ENCODE measurements at regions of chr1 and their contacts with region 1.

Region 1: DNA sequence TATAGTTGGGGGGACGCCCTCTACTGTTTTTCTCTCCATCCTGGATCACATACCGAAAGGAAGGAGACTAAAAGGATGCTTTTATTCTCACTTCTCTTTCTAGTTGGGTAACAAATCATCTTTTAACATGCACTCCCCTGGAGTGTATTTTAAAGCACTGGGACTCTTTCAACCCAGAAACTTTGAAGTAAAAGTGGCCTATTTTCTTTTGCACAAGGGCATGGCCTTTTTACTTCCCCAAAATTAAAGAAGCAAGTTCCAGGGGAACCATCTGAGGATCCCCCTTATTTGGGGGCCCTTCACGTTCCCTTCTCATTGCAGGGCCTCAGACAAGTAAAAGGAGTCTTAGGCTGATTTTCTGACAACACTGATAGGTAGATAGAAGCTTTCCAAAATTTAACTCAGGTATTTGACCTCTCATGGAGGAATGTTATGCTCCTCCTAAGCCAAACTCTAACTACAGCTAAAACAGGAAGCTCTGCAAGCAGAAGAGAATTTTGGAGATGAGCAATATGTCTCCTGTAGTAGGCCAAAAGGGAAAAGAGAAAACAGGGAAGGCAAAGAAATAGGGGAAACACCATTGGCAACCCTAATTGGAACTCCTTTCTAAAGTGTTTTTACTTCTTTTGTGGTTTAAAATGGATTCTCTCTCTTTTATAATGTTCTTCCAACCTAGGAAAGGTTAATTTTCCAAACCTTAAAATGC is 8.9 kb upstream of the CD46 start:
- DNase-seq: no peak
- ATAC-seq: no peak
- H3K4me3 ChIP-seq: no peak overlapping the region
- H3K27ac ChIP-seq: peak overlapping the region; percentile 11; the same call in 1 of the 3 replicates
- H3K4me1 ChIP-seq: peaks cover 7 to 39% of the 10 kb centered on the region in 2 experiments
- H3K27me3 ChIP-seq: no peaks in the 10 kb centered on the region
- CTCF ChIP-seq: no peak
- EP300 ChIP-seq: no peak
- POLR2A ChIP-seq: no peak
- RAD21 ChIP-seq: no peak

Region 2: GRCh38 chr1:207787776-207788175 is 44.8 kb after region 1 on chr1:
- CTCF ChIA-PET with region 1: no interaction called
- POLR2A ChIA-PET with region 1: no interaction called
- in situ Hi-C with region 1: no loop called
- intact Hi-C with region 1: loop called (anchors 5 kb)
- DNase-seq: no peak
- ATAC-seq: no peak
- H3K4me3 ChIP-seq: no peak overlapping the region
- H3K27ac ChIP-seq: no peak overlapping the region
- H3K4me1 ChIP-seq: no peaks in the 10 kb centered on the region
- H3K27me3 ChIP-seq: no peaks in the 10 kb centered on the region
- CTCF ChIP-seq: no peak
- EP300 ChIP-seq: no peak
- POLR2A ChIP-seq: no peak
- RAD21 ChIP-seq: no peak

Measured in K562 (cell line).